CD8-positive, alpha-beta T cell (primary cell): ENCODE measurements at regions of chr16 and their contacts with region 1.

Region 1: GRCh38 chr16:66728117-66728787 is 23.2 kb downstream of the DYNC1LI2 start:
- DNase-seq: peak in 2 of 9 experiments; percentile 49 to 64
- ATAC-seq: peak; percentile 83
- H3K4me3 ChIP-seq: no peak overlapping the region
- H3K4me3 Mint-ChIP-seq: no peak overlapping the region
- H3K27ac ChIP-seq: no peak overlapping the region
- H3K27ac Mint-ChIP-seq: no peak overlapping the region
- H3K4me1 ChIP-seq: no peaks in the 10 kb centered on the region
- H3K4me1 Mint-ChIP-seq: peaks cover 4% of the 10 kb centered on the region
- H3K27me3 ChIP-seq: no peaks in the 10 kb centered on the region
- H3K27me3 Mint-ChIP-seq: no peaks in the 10 kb centered on the region
- CTCF ChIP-seq: peak; percentile 70

Region 2: GRCh38 chr16:66717112-66717675 is 11.1 kb before region 1 on chr16:
- CTCF ChIA-PET with region 1: interaction called, 13 read pairs
- POLR2A ChIA-PET with region 1: no interaction called
- intact Hi-C with region 1: no loop called
- DNase-seq: peak in 1 of 9 experiments; percentile 20
- ATAC-seq: peak; percentile 34
- H3K4me3 ChIP-seq: no peak overlapping the region
- H3K4me3 Mint-ChIP-seq: no peak overlapping the region
- H3K27ac ChIP-seq: no peak overlapping the region
- H3K27ac Mint-ChIP-seq: no peak overlapping the region
- H3K4me1 ChIP-seq: no peaks in the 10 kb centered on the region
- H3K4me1 Mint-ChIP-seq: no peaks in the 10 kb centered on the region
- H3K27me3 ChIP-seq: no peaks in the 10 kb centered on the region
- H3K27me3 Mint-ChIP-seq: no peaks in the 10 kb centered on the region
- CTCF ChIP-seq: no peak

Region 3: GRCh38 chr16:66740010-66740409 is 11.8 kb after region 1 on chr16:
- CTCF ChIA-PET with region 1: interaction called, 82 read pairs
- POLR2A ChIA-PET with region 1: interaction called, 5 read pairs
- intact Hi-C with region 1: no loop called
- DNase-seq: peak in 4 of 9 experiments; percentile 27 to 63 (median 44)
- ATAC-seq: peak; percentile 79
- H3K4me3 ChIP-seq: no peak overlapping the region
- H3K4me3 Mint-ChIP-seq: no peak overlapping the region
- H3K27ac ChIP-seq: no peak overlapping the region
- H3K27ac Mint-ChIP-seq: no peak overlapping the region
- H3K4me1 ChIP-seq: no peaks in the 10 kb centered on the region
- H3K4me1 Mint-ChIP-seq: peaks cover 24% of the 10 kb centered on the region
- H3K27me3 ChIP-seq: no peaks in the 10 kb centered on the region
- H3K27me3 Mint-ChIP-seq: no peaks in the 10 kb centered on the region
- CTCF ChIP-seq: peak; percentile 65